A673 (cell line): ENCODE measurements at regions of chr13 and their contacts with region 1.

Region 1: DNA sequence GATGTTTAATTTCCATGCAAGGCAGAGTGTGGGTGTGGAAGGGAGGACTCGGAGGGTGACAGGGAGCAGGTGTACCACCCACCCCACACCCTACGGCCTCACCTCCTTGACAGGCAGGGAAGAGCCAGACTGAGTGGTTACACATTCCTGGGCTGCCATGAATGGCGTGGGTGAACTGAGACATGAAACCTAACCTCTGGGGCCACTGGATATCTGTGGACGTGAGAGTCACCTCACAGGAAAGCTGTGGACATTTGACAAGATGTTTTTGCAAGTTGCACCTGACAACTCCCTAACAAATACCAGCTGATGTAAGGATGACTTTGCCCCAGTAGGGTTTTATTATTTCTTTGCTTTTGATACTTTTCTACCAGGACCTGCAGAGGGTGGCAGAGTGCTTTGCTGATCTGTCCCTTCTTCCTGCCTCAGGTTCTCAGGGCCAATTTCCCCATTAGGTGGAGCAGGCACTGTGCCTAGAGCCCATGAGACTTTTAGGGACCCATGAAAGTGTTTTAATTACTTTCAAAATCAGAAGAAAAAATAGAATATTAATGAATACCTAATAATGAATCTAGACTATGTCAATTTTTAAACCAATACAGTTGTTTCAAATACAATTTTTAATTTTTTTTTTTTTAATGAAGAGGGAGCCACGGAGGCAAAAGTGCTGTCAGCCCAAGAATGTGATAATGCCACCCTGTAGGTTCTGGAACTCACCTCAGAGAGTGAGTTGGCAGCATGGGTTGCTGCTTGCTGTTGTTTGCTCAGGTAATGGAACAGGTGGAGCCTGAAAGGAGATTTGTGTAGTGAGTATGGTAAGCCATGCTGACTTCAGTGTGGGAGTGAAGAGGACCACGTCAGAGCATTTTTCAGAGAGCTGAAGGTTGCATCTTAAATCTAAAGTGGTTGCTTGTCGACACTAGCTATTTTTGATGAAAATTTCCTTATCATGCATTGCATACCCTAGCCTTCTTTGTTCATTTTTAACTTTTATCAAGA is 58.0 kb upstream of the CYSLTR2 start:
- DNase-seq: peak; percentile 53
- H3K4me3 ChIP-seq: no peak overlapping the region
- H3K27ac ChIP-seq: no peak overlapping the region
- H3K4me1 ChIP-seq: no peaks in the 10 kb centered on the region
- H3K27me3 ChIP-seq: no peaks in the 10 kb centered on the region
- CTCF ChIP-seq: peak; percentile 61

Region 2: DNA sequence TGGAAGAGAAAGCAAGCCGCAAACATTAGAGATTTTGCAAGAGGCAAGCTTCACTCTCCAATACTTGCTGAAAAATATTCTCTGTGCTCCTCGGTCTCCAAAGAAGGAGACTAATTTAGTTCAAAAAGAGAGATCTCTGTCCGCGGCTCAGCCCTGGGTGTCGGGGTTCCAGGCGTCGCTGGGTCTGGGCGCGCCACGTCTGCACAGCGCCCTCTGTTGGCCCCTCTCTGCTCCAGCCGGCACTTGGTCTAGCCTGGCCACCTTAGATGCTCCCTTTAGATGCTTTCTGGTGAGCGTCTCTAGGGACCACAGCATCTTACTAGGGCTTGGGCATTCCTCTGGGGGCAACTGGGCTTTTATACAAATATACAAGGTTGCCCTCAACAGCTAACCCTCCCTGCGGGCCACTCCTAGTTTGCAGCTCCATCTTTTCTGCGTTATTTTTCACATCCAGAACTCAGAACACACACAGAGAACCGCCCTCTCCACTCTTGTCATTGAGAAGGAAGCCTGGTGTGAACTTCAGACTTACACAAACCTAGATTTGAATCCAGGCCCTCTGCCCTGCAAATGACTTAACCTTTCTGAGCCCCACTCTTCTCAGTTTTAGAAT is 136.3 kb after region 1 on chr13:
- CTCF ChIA-PET with region 1: no interaction called
- POLR2A ChIA-PET with region 1: no interaction called
- intact Hi-C with region 1: loop called (anchors 10 kb)
- DNase-seq: peak; percentile 67
- H3K4me3 ChIP-seq: no peak overlapping the region
- H3K27ac ChIP-seq: no peak overlapping the region
- H3K4me1 ChIP-seq: peaks cover 10% of the 10 kb centered on the region
- H3K27me3 ChIP-seq: no peaks in the 10 kb centered on the region
- CTCF ChIP-seq: peak; percentile 95